MCF 10A (cell line): ENCODE measurements at regions of chr16 and their contacts with region 1.

Region 1: DNA sequence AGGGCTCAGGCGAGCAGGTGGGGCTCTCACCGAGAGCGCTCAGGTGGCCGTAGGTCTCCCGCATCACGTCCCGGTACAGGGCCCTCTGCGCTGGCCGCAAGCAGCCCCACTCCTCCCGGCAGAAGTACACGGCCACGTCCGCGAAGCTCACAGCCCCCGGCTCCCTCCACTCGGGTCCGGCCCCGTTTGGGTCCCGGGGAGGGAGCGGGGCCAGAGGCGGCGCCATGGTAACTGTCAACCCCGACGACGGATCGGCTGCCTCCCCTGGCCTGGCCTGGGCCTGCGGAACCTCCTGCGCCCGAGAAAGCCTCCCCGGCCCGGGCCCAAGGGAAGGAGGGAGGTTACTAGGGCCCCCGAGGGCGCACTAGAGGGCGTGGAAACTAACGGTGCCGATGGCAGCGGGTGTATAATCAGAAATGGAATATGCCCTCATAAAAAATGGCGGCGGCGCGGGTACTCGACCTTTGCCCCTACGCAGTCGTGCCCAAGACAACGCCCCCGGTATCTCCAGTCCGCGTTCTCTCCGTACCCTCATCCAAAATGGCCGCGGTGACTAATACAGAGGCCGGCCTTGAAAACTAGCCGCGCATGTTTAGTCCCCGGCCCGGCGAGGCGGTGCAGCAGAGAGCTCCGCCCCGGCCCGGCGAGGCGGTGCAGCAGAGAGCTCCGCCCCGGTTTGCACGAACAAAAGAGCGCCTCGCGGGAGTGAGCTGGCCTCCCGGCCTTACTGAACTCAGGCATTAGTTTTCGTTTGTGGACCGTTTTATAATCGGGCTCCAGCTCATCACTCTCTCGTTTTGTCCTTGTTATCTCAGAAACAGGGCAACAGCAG is at the start of gene ZNF764:
- DNase-seq: peak; percentile 99
- H3K4me3 Mint-ChIP-seq: peak within 1 kb of the TSS; percentile 77
- H3K27ac Mint-ChIP-seq: peak within 1 kb of the TSS; percentile 79
- H3K4me1 Mint-ChIP-seq: peaks cover 5% of the 10 kb centered on the region
- H3K27me3 Mint-ChIP-seq: no peaks in the 10 kb centered on the region
- CTCF ChIP-seq: no peak
- total RNA-seq, gene ZNF764: 8.3 and 10.6 TPM in 2 replicates

Region 2: GRCh38 chr16:30526823-30527635 is 31.1 kb before region 1 on chr16:
- CTCF ChIA-PET with region 1: interaction called, 3 read pairs
- POLR2A ChIA-PET with region 1: interaction called, 38 read pairs
- intact Hi-C with region 1: no loop called
- DNase-seq: peak; percentile 99
- H3K4me3 Mint-ChIP-seq: peak overlapping the region; percentile 81
- H3K27ac Mint-ChIP-seq: peak overlapping the region; percentile 88
- H3K4me1 Mint-ChIP-seq: peaks cover 21% of the 10 kb centered on the region
- H3K27me3 Mint-ChIP-seq: no peaks in the 10 kb centered on the region
- CTCF ChIP-seq: peak; percentile 18

Region 3: GRCh38 chr16:30571695-30572600 is 13.8 kb after region 1 on chr16 and contains the start of gene ZNF688:
- CTCF ChIA-PET with region 1: interaction called, 3 read pairs
- POLR2A ChIA-PET with region 1: interaction called, 39 read pairs
- intact Hi-C with region 1: no loop called
- DNase-seq: peak; percentile 97
- H3K4me3 Mint-ChIP-seq: peak within 1 kb of the TSS; percentile 75
- H3K27ac Mint-ChIP-seq: peak within 1 kb of the TSS; percentile 76
- H3K4me1 Mint-ChIP-seq: peaks cover 19% of the 10 kb centered on the region
- H3K27me3 Mint-ChIP-seq: no peaks in the 10 kb centered on the region
- CTCF ChIP-seq: no peak
- total RNA-seq, gene ZNF688: 9.0 and 11.6 TPM in 2 replicates

Region 4: GRCh38 chr16:30585400-30586189 is 27.4 kb after region 1 on chr16 and contains the start of gene ZNF785:
- CTCF ChIA-PET with region 1: no interaction called
- POLR2A ChIA-PET with region 1: interaction called, 28 read pairs
- intact Hi-C with region 1: loop called (anchors 1 kb)
- DNase-seq: peak; percentile 100
- H3K4me3 Mint-ChIP-seq: peak within 1 kb of the TSS; percentile 96
- H3K27ac Mint-ChIP-seq: peak within 1 kb of the TSS; percentile 78
- H3K4me1 Mint-ChIP-seq: no peaks in the 10 kb centered on the region
- H3K27me3 Mint-ChIP-seq: no peaks in the 10 kb centered on the region
- CTCF ChIP-seq: no peak
- total RNA-seq, gene ZNF785: 12.8 and 16.3 TPM in 2 replicates

Region 5: DNA sequence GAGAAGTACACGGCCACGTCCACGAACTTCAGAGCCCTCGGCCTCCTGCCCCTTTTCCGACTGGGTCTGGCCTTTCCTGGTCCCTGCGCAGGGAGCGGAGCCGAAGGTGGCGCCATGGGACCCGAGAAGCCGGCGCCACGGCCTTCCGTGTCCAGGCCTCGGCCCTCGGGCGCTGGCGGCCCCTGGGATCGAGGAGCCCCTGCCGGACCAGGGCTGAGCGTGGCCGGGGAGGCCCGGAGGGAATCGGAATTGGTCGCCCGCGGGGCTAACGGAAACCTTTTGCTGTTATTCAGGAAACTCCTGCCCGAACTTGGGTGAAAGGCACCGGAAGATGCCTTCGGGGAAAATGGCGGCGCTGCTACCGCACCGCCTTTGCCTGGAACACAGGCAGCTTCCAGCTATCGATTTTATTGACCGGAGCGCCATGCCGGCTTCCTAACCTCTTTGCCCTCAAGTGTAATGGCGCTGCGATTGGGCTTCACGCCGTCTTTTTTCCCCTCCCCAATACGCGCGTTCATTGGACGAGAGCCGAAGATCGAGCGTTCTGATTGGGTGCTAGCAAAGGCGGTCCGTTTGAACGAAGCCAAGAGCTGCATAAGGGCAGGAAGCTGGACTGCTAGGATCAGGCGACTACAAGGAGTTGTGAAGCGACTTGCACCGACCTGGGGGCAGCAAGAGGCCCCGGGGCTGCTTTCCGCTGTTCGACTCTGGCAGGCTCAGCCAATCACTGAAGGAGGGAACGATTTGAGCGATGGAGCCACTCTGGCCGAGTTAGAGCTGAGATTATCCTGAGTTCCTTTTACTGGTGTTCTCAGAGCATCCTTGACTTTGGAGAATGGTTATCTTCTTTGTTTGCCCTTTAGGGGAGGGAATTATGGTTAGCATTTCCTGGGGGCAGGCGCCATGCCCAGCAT is 52.0 kb after region 1 on chr16 and contains the start of gene ZNF689:
- CTCF ChIA-PET with region 1: interaction called, 4 read pairs
- POLR2A ChIA-PET with region 1: interaction called, 12 read pairs
- intact Hi-C with region 1: no loop called
- DNase-seq: peak; percentile 98
- H3K4me3 Mint-ChIP-seq: peak within 1 kb of the TSS; percentile 80
- H3K27ac Mint-ChIP-seq: peak within 1 kb of the TSS; percentile 92
- H3K4me1 Mint-ChIP-seq: no peaks in the 10 kb centered on the region
- H3K27me3 Mint-ChIP-seq: no peaks in the 10 kb centered on the region
- CTCF ChIP-seq: no peak
- total RNA-seq, gene ZNF689: 4.5 and 6.1 TPM in 2 replicates

Region 6: GRCh38 chr16:30628627-30629540 is 70.7 kb after region 1 on chr16:
- CTCF ChIA-PET with region 1: interaction called, 10 read pairs
- POLR2A ChIA-PET with region 1: interaction called, 5 read pairs
- intact Hi-C with region 1: no loop called
- DNase-seq: peak; percentile 87
- H3K4me3 Mint-ChIP-seq: no peak overlapping the region
- H3K27ac Mint-ChIP-seq: no peak overlapping the region
- H3K4me1 Mint-ChIP-seq: peaks cover 6% of the 10 kb centered on the region
- H3K27me3 Mint-ChIP-seq: no peaks in the 10 kb centered on the region
- CTCF ChIP-seq: peak; percentile 84

Region 7: DNA sequence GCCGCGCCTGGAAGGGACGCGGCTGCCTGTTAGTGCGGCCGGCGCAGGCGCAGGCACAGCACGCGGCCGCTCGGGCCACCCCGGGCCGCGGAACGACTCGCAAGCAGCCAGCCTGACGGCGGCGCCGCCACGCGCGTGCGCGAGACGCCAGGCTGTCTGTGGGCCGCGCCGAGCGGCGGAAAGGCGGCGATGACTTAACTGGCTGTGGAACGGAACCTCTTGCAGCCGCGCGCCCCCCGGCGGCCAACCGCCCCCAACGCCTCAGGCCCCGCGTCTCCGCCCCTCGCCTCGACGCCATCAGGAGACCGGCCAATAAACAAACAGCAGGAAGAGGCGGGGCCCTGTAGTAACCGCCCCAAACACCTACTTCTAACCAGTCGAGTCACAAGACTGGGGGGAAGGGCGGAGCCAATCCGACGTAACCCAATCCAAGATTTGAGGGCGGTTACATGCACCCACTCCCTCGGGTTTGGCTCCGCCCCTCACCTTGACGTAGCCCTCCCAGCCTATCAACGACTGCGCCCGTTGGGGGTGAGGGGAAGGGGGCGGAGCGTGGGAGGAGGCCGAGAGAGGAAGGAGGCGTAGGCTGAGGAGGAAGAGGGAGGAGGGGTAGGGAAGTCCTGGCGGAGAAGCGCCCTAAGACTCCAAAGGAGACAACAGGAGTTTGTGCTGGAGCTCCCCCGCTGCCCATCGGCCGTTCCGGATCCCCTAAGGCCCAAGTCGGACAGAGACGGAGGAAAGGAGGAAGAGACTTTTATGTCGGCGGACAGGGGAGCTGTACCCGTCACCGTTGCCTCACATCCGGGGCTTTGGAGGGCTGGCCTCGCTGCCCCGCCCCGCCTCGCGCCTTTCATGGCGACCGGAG is 99.9 kb after region 1 on chr16 and contains the start of gene FBRS:
- CTCF ChIA-PET with region 1: no interaction called
- POLR2A ChIA-PET with region 1: interaction called, 12 read pairs
- intact Hi-C with region 1: no loop called
- DNase-seq: peak; percentile 100
- H3K4me3 Mint-ChIP-seq: peak within 1 kb of the TSS; percentile 93
- H3K27ac Mint-ChIP-seq: peak within 1 kb of the TSS; percentile 100
- H3K4me1 Mint-ChIP-seq: peaks cover 21% of the 10 kb centered on the region
- H3K27me3 Mint-ChIP-seq: no peaks in the 10 kb centered on the region
- CTCF ChIP-seq: peak; percentile 57
- total RNA-seq, gene FBRS: 69.1 and 80.8 TPM in 2 replicates

Region 8: GRCh38 chr16:30669896-30670797 is 112.0 kb after region 1 on chr16:
- CTCF ChIA-PET with region 1: no interaction called
- POLR2A ChIA-PET with region 1: no interaction called
- intact Hi-C with region 1: no loop called
- DNase-seq: no peak
- H3K4me3 Mint-ChIP-seq: no peak overlapping the region
- H3K27ac Mint-ChIP-seq: no peak overlapping the region
- H3K4me1 Mint-ChIP-seq: no peaks in the 10 kb centered on the region
- H3K27me3 Mint-ChIP-seq: no peaks in the 10 kb centered on the region
- CTCF ChIP-seq: no peak